PC-3 (cell line): ENCODE measurements at regions of chr14 and their contacts with region 1.

Region 1: DNA sequence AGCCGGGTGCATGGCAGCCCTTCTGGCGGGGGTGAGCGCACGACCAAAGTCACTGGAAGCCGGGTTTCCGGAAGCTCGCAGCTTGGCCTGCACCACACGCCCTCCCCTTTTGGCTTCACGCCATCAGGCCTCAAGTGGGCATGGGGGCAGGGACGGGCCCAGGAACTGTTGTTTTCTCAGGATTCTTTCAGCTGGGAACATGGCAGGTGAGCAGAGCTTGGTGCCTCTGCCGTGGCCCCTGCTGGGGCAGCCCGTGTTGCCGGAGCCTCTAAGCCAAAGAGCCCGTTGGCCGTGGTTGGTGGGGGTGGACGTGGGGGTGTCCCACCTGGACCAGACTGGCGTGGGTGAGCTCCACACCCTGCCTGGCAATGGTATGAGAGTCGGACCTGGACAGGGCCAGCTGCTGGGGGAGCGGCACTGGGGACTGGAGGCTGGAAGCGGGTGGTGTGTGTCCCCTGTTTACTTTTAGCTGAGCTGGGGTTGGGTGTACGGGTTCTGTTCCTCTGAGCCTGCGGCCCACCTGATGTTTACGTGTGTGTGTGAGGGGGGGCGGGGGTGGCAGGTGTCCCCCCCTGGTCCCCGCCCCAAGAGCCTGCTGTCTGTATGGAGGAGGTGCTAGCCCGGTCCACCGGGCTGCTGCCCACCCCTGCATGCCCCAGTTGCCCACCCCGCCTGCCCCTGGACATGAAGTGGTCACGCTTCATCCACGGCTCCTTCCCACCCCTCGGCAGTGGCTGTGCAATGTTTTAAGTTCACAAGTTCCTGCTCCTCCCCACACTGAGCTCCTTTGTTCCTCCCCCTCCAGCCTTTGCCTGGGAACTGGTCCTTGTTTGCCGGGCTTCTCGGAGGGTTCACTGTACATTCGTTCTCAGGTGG is 28.7 kb upstream of the PLD4 start:
- DNase-seq: no peak
- ATAC-seq: peak; percentile 8; the same call in 1 of the 2 replicates
- H3K4me3 ChIP-seq: no peak overlapping the region
- H3K27ac ChIP-seq: no peak overlapping the region
- H3K4me1 ChIP-seq: no peaks in the 10 kb centered on the region
- H3K27me3 ChIP-seq: no peaks in the 10 kb centered on the region
- CTCF ChIP-seq: no peak

Region 2: GRCh38 chr14:105005929-105006830 is 110.2 kb after region 1 on chr14:
- CTCF ChIA-PET with region 1: no interaction called
- POLR2A ChIA-PET with region 1: interaction called, 10 read pairs
- intact Hi-C with region 1: no loop called
- DNase-seq: no peak
- ATAC-seq: peak; percentile 38
- H3K4me3 ChIP-seq: no peak overlapping the region
- H3K27ac ChIP-seq: no peak overlapping the region
- H3K4me1 ChIP-seq: peaks cover 11% of the 10 kb centered on the region
- H3K27me3 ChIP-seq: no peaks in the 10 kb centered on the region
- CTCF ChIP-seq: no peak

Region 3: GRCh38 chr14:105045710-105046326 is 149.8 kb after region 1 on chr14:
- CTCF ChIA-PET with region 1: no interaction called
- POLR2A ChIA-PET with region 1: no interaction called
- intact Hi-C with region 1: loop called (anchors 1 kb)
- DNase-seq: peak; percentile 92
- ATAC-seq: peak; percentile 88
- H3K4me3 ChIP-seq: peak overlapping the region; percentile 14; the same call in 1 of the 2 replicates
- H3K27ac ChIP-seq: no peak overlapping the region
- H3K4me1 ChIP-seq: no peaks in the 10 kb centered on the region
- H3K27me3 ChIP-seq: no peaks in the 10 kb centered on the region
- CTCF ChIP-seq: peak; percentile 99